ENCODE measurements at regions of chr19 and their contacts with region 1.

Region 1: GRCh38 chr19:6767357-6768235 is at the start of gene SH2D3A:
- DNase-seq: peak; percentile 77 to 96
- ATAC-seq: peak; percentile 80 to 86
- H3K4me3 ChIP-seq: peak within 1 kb of the TSS; percentile 60
- H3K27ac ChIP-seq: peak within 1 kb of the TSS; percentile 76 to 89
- H3K4me1 ChIP-seq: peaks cover 22% of the 10 kb centered on the region
- CTCF ChIP-seq: no peak
- EP300 ChIP-seq: no peak
- POLR2A ChIP-seq: no peak
- RAD21 ChIP-seq: no peak
- polyA plus RNA-seq, gene SH2D3A: 6.5 and 6.7 TPM in 2 replicates

Region 2: GRCh38 chr19:6694147-6694815 is 73.3 kb before region 1 on chr19:
- CTCF ChIA-PET with region 1: no interaction called
- POLR2A ChIA-PET with region 1: no interaction called
- DNase-seq: peak in 1 of 2 experiments; percentile 40
- ATAC-seq: peak in 1 of 2 experiments; percentile 63; a peak in 3 of 6 replicates
- H3K4me3 ChIP-seq: no peak overlapping the region
- H3K27ac ChIP-seq: no peak overlapping the region
- H3K4me1 ChIP-seq: no peaks in the 10 kb centered on the region
- CTCF ChIP-seq: no peak
- EP300 ChIP-seq: no peak
- POLR2A ChIP-seq: no peak
- RAD21 ChIP-seq: no peak

Region 3: GRCh38 chr19:6737284-6738046 is 30.1 kb before region 1 on chr19 and contains the start of gene GPR108:
- CTCF ChIA-PET with region 1: interaction called, 20 read pairs
- POLR2A ChIA-PET with region 1: interaction called, 3 read pairs
- DNase-seq: peak; percentile 94 to 99
- ATAC-seq: peak; percentile 62 to 79
- H3K4me3 ChIP-seq: peak within 1 kb of the TSS; percentile 93
- H3K27ac ChIP-seq: peak within 1 kb of the TSS; percentile 97 to 98
- H3K4me1 ChIP-seq: peaks cover 29% of the 10 kb centered on the region
- CTCF ChIP-seq: no peak
- EP300 ChIP-seq: no peak
- POLR2A ChIP-seq: no peak; the same call in 1 of the 2 replicates
- RAD21 ChIP-seq: no peak
- polyA plus RNA-seq, gene GPR108: 50.2 and 69.4 TPM in 2 replicates

Region 4: GRCh38 chr19:6779206-6779605 is 11.6 kb after region 1 on chr19:
- CTCF ChIA-PET with region 1: interaction called, 10 read pairs
- POLR2A ChIA-PET with region 1: no interaction called
- DNase-seq: no peak
- ATAC-seq: no peak
- H3K4me3 ChIP-seq: no peak overlapping the region
- H3K27ac ChIP-seq: no peak overlapping the region
- H3K4me1 ChIP-seq: peaks cover 8% of the 10 kb centered on the region; the same call in 2 of the 3 replicates
- CTCF ChIP-seq: no peak
- EP300 ChIP-seq: no peak
- POLR2A ChIP-seq: no peak
- RAD21 ChIP-seq: no peak

Region 5: GRCh38 chr19:6801485-6802086 is 34.0 kb after region 1 on chr19:
- CTCF ChIA-PET with region 1: interaction called, 5 read pairs
- POLR2A ChIA-PET with region 1: interaction called, 10 read pairs
- DNase-seq: peak; percentile 53 to 87
- ATAC-seq: peak; percentile 78 to 90
- H3K4me3 ChIP-seq: peak overlapping the region; percentile 44
- H3K27ac ChIP-seq: peak overlapping the region; percentile 92 to 100
- H3K4me1 ChIP-seq: peaks cover 24% of the 10 kb centered on the region
- CTCF ChIP-seq: no peak
- EP300 ChIP-seq: no peak
- POLR2A ChIP-seq: peak; percentile 8; the same call in 1 of the 2 replicates
- RAD21 ChIP-seq: no peak

Measured in A549 (cell line).